ENCODE measurements at regions of chr6 and their contacts with region 1.

Region 1: DNA sequence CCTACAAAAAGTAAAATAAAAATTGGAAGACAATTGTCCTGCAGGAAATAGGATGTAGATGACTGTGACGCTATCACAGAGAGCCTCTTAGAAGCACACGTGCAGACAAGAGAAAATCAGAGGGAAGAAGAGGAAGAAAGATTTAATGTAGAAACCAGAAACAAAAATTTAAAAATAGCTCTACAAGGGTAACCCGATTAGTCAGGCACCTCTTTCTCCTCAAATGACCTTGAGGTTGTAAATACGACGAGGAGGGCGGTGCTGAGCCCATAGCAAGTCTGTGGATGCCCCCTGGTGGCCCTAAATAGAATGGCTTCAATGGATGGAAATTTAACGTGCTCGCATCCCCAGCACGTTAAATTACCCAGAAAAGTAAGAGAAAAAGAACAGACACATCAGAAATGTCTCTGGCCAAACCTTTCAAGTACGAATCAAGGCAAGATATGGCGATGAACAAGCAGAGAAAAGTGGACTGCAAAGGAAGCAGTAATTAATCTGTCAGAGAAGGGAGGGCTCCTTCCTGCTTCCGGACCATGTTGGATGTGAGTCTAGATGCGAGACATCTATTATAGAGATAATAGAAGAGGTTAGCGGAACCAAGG is 4.2 kb upstream of the PRPH2 start:
- DNase-seq: peak; percentile 88
- H3K4me3 ChIP-seq: peak overlapping the region; percentile 31 to 68 (median 48)
- H3K27ac ChIP-seq: peak overlapping the region; percentile 37
- H3K4me1 ChIP-seq: peaks cover 11% of the 10 kb centered on the region
- H3K27me3 ChIP-seq: no peaks in the 10 kb centered on the region
- CTCF ChIP-seq: peak; percentile 79 to 86
- POLR2A ChIP-seq: no peak

Region 2: GRCh38 chr6:42661540-42662153 is 64.9 kb before region 1 on chr6:
- CTCF ChIA-PET with region 1: interaction called, 94 read pairs
- POLR2A ChIA-PET with region 1: no interaction called
- dilution Hi-C with region 1: no loop called
- intact Hi-C with region 1: loop called (anchors 1 kb)
- DNase-seq: peak; percentile 73
- H3K4me3 ChIP-seq: no peak overlapping the region
- H3K27ac ChIP-seq: no peak overlapping the region
- H3K4me1 ChIP-seq: no peaks in the 10 kb centered on the region
- H3K27me3 ChIP-seq: no peaks in the 10 kb centered on the region
- CTCF ChIP-seq: peak; percentile 71 to 75
- POLR2A ChIP-seq: no peak

Region 3: GRCh38 chr6:42714098-42714761 is 12.4 kb before region 1 on chr6:
- CTCF ChIA-PET with region 1: interaction called, 10 read pairs
- POLR2A ChIA-PET with region 1: no interaction called
- dilution Hi-C with region 1: no loop called
- intact Hi-C with region 1: no loop called
- DNase-seq: peak; percentile 20
- H3K4me3 ChIP-seq: no peak overlapping the region
- H3K27ac ChIP-seq: no peak overlapping the region
- H3K4me1 ChIP-seq: peaks cover 6% of the 10 kb centered on the region
- H3K27me3 ChIP-seq: no peaks in the 10 kb centered on the region
- CTCF ChIP-seq: no peak
- POLR2A ChIP-seq: no peak

Region 4: GRCh38 chr6:42762426-42762859 is 35.9 kb after region 1 on chr6:
- CTCF ChIA-PET with region 1: no interaction called
- POLR2A ChIA-PET with region 1: no interaction called
- dilution Hi-C with region 1: no loop called
- intact Hi-C with region 1: no loop called
- DNase-seq: no peak
- H3K4me3 ChIP-seq: no peak overlapping the region
- H3K27ac ChIP-seq: no peak overlapping the region
- H3K4me1 ChIP-seq: peaks cover 9% of the 10 kb centered on the region
- H3K27me3 ChIP-seq: no peaks in the 10 kb centered on the region
- CTCF ChIP-seq: no peak
- POLR2A ChIP-seq: no peak

Region 5: DNA sequence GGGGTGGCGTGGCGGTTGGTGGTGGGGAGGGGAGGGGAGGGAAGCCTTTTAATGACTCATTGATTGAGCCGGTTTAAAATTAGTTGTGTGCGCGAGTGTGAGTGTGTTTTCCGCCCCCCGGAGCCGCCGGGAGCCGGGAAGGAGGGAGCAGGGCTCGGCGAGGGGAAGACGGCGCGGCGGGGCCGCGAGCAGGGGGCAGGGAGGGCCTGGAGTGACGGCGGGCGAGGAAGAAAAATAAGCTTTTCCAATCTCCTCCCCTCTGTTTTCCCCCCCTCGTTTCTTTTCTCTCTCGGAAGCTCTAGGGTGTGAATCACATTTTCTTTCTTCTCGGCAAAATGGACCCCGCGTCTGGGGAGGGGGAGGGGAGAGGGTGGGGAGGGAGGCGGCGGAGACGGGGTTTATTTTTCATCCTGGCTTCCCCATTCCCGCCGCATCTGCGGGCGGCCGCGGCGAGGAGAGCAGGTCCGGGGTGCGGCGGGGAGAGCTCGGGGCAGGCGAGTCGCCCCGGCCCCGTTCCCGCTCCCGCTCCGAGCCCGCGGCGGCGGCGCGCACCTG is 56.1 kb after region 1 on chr6:
- CTCF ChIA-PET with region 1: interaction called, 19 read pairs
- POLR2A ChIA-PET with region 1: interaction called, 7 read pairs
- dilution Hi-C with region 1: no loop called
- intact Hi-C with region 1: loop called (anchors 1 kb)
- DNase-seq: peak; percentile 95
- H3K4me3 ChIP-seq: peak overlapping the region; percentile 87 to 98 (median 94)
- H3K27ac ChIP-seq: peak overlapping the region; percentile 99
- H3K4me1 ChIP-seq: peaks cover 16% of the 10 kb centered on the region
- H3K27me3 ChIP-seq: no peaks in the 10 kb centered on the region
- CTCF ChIP-seq: no peak
- POLR2A ChIP-seq: peak; percentile 59

Region 6: DNA sequence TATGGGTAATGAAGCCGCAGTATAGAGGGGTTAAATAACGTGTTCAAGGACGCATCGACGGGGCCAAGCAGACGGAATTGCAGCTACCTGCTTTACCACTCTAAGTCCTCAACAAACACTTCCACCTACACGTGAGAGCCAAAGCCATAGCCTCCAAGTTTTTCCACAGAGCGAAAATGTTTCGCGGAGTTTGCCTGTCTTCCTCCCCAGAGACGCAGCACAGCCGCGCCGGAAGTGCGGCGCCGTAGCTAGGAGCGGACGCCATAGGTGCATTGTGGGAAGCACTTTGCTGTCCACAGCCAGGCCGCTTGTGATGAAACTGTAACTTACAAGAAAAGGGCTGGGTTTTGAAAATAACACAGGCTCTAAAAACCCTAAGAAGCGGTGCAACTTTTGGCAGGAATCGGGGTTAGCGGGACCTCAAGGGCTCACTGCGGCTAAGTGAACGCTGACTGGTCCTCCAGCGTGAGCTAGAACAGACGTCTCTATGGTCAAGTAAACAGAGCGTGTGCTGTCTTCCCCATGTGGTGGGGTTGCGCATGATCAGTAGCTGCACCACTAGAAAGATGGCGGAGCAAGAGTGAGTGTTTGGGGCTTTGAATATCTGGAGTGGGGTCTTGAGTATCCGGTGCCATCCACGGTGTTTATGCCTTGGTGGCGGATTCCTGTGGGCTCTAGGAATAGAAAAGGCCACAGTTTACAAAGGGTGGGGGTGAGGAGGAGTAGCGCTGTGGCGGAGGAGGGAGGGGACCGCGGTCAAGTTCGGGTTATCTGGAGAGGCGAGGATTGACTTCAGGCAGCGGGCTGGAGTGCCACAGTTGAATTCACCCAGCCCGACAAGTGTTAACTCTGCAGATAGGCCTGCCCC is 153.0 kb after region 1 on chr6 and contains the start of gene RPL7L1:
- CTCF ChIA-PET with region 1: interaction called, 12 read pairs
- POLR2A ChIA-PET with region 1: interaction called, 3 read pairs
- dilution Hi-C with region 1: no loop called
- intact Hi-C with region 1: loop called (anchors 1 kb)
- DNase-seq: peak; percentile 90
- H3K4me3 ChIP-seq: peak within 1 kb of the TSS; percentile 77 to 91 (median 86)
- H3K27ac ChIP-seq: peak within 1 kb of the TSS; percentile 68
- H3K4me1 ChIP-seq: peaks cover 6% of the 10 kb centered on the region
- H3K27me3 ChIP-seq: no peaks in the 10 kb centered on the region
- CTCF ChIP-seq: no peak
- POLR2A ChIP-seq: peak; percentile 91
- total RNA-seq, gene RPL7L1: 94.4 and 103 TPM in 2 replicates